ENCODE measurements at regions of chrX and their contacts with region 1.

Region 1: GRCh38 chrX:33218819-33219218 is 7.5 kb upstream of the DMD start:
- DNase-seq: no peak

Region 2: DNA sequence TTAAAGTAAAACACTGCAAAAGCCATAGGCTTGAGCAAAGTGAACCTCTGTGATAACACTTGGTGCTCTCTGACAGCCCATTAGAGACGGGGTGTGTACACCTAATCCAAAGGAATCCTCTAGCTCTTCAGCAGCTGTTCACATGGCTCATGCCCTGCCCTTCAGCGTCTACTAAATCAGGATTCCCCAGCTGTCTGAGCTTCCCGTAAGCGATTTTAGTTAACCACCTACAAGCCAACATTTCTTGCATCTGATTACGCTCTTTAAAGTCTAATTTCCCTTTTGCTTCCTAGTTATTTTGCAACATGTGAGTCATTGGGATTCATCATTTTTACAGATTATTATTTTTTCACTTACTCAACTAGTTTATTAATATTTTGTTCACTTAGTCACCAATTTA is 13.9 kb before region 1 on chrX:
- intact Hi-C with region 1: loop called in 1 of 2 experiments (anchors 1 kb)
- DNase-seq: peak; percentile 43